ENCODE measurements at regions of chr1 and their contacts with region 1.

Region 1: DNA sequence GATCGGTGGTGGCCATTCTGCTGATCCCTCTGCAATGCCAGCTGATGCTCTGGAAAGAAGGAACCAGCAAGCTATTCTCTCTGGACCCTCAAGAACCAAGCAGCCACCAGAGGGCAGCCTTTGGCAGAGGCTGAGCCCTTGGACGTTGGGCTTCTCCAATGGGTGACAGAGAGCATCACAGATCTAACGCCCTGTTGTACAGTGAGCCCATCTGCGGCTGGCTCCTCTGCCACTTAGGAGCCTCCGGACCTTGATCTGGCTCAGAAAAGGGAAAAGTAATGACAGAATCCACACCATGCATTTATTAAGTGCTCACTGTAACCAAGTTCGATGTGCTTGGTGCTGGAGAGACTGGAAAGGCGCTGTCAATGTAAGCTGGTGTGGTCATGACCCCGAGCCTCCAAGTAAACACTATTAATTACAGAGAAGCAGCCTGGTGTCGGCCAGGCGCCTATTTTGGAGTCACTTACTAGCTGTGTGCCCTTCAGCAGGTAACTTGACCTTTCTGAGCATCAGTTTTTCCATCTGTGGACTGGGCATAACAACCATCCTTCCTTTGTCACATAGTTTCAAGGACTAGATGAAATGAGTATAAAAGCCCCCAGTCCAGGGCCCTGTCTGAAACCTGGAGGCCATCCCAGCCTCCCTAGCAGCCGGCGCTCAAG is 34.9 kb downstream of the ECE1 start:
- DNase-seq: peak; percentile 90
- H3K4me3 ChIP-seq: no peak overlapping the region
- H3K27ac ChIP-seq: peak overlapping the region; percentile 64
- H3K4me1 ChIP-seq: peaks cover 51% of the 10 kb centered on the region
- H3K27me3 ChIP-seq: no peaks in the 10 kb centered on the region
- CTCF ChIP-seq: peak; percentile 90

Region 2: GRCh38 chr1:20913242-20913641 is 342.2 kb before region 1 on chr1:
- intact Hi-C with region 1: no loop called
- DNase-seq: no peak
- H3K4me3 ChIP-seq: no peak overlapping the region
- H3K27ac ChIP-seq: no peak overlapping the region
- H3K4me1 ChIP-seq: no peaks in the 10 kb centered on the region
- H3K27me3 ChIP-seq: no peaks in the 10 kb centered on the region
- CTCF ChIP-seq: no peak

Region 3: GRCh38 chr1:21050031-21050430 is 205.4 kb before region 1 on chr1:
- intact Hi-C with region 1: no loop called
- DNase-seq: no peak
- H3K4me3 ChIP-seq: no peak overlapping the region
- H3K27ac ChIP-seq: no peak overlapping the region
- H3K4me1 ChIP-seq: peaks cover 15% of the 10 kb centered on the region
- H3K27me3 ChIP-seq: no peaks in the 10 kb centered on the region
- CTCF ChIP-seq: no peak

Region 4: DNA sequence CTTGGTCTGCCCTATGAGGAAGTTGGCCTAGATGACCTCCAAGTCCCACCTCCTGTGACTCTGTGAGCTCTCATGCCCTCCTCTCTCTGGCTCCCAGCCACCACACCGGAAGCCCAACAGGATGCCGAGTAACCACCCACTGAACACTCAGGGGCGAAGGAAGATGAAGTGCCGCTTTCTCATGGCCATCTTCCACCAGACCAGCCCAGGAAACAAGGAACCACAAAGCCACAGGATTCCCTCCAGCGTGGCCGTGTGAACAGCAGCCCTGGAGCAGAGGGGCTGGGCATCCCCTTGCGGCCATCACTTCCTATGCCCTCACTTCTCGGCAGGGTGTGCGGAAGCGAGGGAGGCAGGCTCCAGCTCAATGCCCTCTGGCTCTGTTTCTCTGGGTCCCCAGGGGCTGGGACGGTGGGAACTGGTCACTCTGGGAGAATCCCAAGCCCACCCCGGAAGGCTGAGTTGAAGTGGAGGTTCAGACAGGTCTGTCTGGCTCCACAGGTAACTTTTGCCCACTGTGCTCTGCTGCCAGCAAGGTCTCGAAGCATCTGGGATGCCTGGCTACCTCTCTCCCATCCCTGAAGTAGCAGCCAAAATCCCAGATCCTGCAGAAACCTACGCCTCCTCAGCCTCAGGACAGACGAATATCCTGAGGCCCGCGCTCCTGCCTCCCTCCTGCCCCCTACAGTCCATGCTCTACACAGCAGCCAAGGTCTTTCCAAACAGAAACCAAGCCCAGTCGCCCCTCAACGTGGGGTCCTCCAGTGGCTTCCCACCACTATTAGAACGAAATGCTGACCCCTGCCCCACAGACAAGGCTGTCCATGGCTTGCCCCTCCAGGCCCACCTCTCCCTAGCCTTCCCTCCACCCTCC is 79.0 kb after region 1 on chr1:
- intact Hi-C with region 1: loop called (anchors 5 kb)
- DNase-seq: peak; percentile 72
- H3K4me3 ChIP-seq: peak overlapping the region; percentile 51
- H3K27ac ChIP-seq: peak overlapping the region; percentile 86
- H3K4me1 ChIP-seq: peaks cover 84% of the 10 kb centered on the region
- H3K27me3 ChIP-seq: no peaks in the 10 kb centered on the region
- CTCF ChIP-seq: peak; percentile 88

Measured in left ventricle myocardium inferior (tissue), 1 donor.